Stomach (tissue), 19 donors: ENCODE measurements at regions of chr6 and their contacts with region 1.

Region 1: GRCh38 chr6:86192123-86192522 is 549.4 kb upstream of the SYNCRIP start:
- DNase-seq: peak in 1 of 2 donors; percentile 11
- H3K4me3 ChIP-seq: no peak overlapping the region
- H3K27ac ChIP-seq: no peak overlapping the region
- H3K4me1 ChIP-seq: no peaks in the 10 kb centered on the region
- H3K27me3 ChIP-seq: no peaks in the 10 kb centered on the region
- CTCF ChIP-seq: peak in 4 of 7 experiments; percentile 7 to 41 (median 24)
- EP300 ChIP-seq: no peak
- POLR2A ChIP-seq: no peak

Region 2: GRCh38 chr6:85764844-85765243 is 427.3 kb before region 1 on chr6:
- intact Hi-C with region 1: loop called (anchors 10 kb)
- DNase-seq: no peak
- H3K4me3 ChIP-seq: no peak overlapping the region
- H3K27ac ChIP-seq: no peak overlapping the region
- H3K4me1 ChIP-seq: no peaks in the 10 kb centered on the region
- H3K27me3 ChIP-seq: no peaks in the 10 kb centered on the region
- CTCF ChIP-seq: no peak
- EP300 ChIP-seq: no peak
- POLR2A ChIP-seq: no peak